ENCODE measurements at regions of chr1 and their contacts with region 1.

Region 1: GRCh38 chr1:204806943-204807687 is 63.5 kb upstream of the NFASC start:
- DNase-seq: peak; percentile 78
- ATAC-seq: peak; percentile 95
- H3K4me3 Mint-ChIP-seq: peak overlapping the region; percentile 93
- H3K27ac Mint-ChIP-seq: no peak overlapping the region
- H3K4me1 Mint-ChIP-seq: peaks cover 18% of the 10 kb centered on the region
- H3K27me3 Mint-ChIP-seq: peaks cover 3% of the 10 kb centered on the region
- CTCF ChIP-seq: peak; percentile 100

Region 2: GRCh38 chr1:204162231-204163074 is 644.7 kb before region 1 on chr1:
- CTCF ChIA-PET with region 1: interaction called, 27 read pairs
- POLR2A ChIA-PET with region 1: no interaction called
- intact Hi-C with region 1: loop called (anchors 1 kb)
- DNase-seq: peak; percentile 71
- ATAC-seq: peak; percentile 98
- H3K4me3 Mint-ChIP-seq: no peak overlapping the region
- H3K27ac Mint-ChIP-seq: no peak overlapping the region
- H3K4me1 Mint-ChIP-seq: no peaks in the 10 kb centered on the region
- H3K27me3 Mint-ChIP-seq: peaks cover 20% of the 10 kb centered on the region
- CTCF ChIP-seq: peak; percentile 60

Region 3: DNA sequence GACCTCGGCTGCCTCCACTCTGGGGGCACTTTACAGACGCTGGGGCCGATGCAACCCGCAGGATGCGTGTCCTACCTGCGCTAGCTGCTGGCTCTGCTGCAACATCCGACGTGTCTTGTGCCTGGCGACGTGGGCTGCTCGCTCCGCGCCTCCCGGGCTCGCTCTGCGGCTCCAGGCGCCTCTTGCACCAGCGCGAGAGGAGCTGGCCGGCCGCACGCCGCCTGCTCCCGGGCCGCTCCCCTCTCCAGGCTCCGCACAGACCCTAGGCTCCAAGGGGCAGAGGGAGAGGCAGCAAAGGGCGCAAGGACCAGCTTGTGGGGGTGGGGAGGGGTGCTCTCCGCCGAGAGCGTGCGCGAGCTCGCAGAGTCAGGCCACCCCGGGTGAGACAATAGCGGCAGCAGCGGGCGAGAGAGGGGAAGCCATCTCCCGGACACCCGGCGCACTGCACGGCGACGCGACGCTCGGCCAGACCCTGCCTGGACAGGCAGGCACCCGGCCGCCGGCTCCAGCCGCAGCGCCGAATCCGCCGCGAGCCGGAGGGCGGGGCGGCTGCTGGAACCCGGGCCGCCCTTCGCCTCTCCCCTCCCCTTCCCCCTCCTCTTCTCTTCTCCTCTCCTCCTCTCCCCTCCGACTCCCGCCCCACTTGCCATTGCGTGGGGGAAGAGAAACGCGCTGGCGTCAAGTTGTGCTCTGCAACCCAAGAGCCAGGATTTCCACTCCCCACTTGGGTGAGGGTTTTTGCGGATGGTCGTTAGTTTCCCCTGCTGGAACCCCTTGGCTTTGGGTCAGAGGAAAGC is 312.6 kb before region 1 on chr1 and contains the start of gene PIK3C2B:
- CTCF ChIA-PET with region 1: interaction called, 4 read pairs
- POLR2A ChIA-PET with region 1: no interaction called
- intact Hi-C with region 1: loop called (anchors 1 kb)
- DNase-seq: peak; percentile 71
- ATAC-seq: peak; percentile 75
- H3K4me3 Mint-ChIP-seq: peak within 1 kb of the TSS; percentile 97
- H3K27ac Mint-ChIP-seq: peak within 1 kb of the TSS; percentile 97
- H3K4me1 Mint-ChIP-seq: peaks cover 80% of the 10 kb centered on the region
- H3K27me3 Mint-ChIP-seq: no peaks in the 10 kb centered on the region
- CTCF ChIP-seq: no peak
- total RNA-seq, gene PIK3C2B: 127 and 151 TPM in 2 replicates

Region 4: GRCh38 chr1:204565617-204566582 is 241.2 kb before region 1 on chr1:
- CTCF ChIA-PET with region 1: interaction called, 155 read pairs
- POLR2A ChIA-PET with region 1: interaction called, 9 read pairs
- intact Hi-C with region 1: loop called (anchors 1 kb)
- DNase-seq: peak; percentile 31
- ATAC-seq: peak; percentile 80
- H3K4me3 Mint-ChIP-seq: peak overlapping the region; percentile 22
- H3K27ac Mint-ChIP-seq: peak overlapping the region; percentile 68
- H3K4me1 Mint-ChIP-seq: peaks cover 41% of the 10 kb centered on the region
- H3K27me3 Mint-ChIP-seq: no peaks in the 10 kb centered on the region
- CTCF ChIP-seq: peak; percentile 61

Region 5: GRCh38 chr1:204651843-204652421 is 155.2 kb before region 1 on chr1:
- CTCF ChIA-PET with region 1: no interaction called
- POLR2A ChIA-PET with region 1: no interaction called
- intact Hi-C with region 1: no loop called
- DNase-seq: no peak
- ATAC-seq: no peak
- H3K4me3 Mint-ChIP-seq: no peak overlapping the region
- H3K27ac Mint-ChIP-seq: no peak overlapping the region
- H3K4me1 Mint-ChIP-seq: no peaks in the 10 kb centered on the region
- H3K27me3 Mint-ChIP-seq: peaks cover 15% of the 10 kb centered on the region
- CTCF ChIP-seq: no peak

Region 6: DNA sequence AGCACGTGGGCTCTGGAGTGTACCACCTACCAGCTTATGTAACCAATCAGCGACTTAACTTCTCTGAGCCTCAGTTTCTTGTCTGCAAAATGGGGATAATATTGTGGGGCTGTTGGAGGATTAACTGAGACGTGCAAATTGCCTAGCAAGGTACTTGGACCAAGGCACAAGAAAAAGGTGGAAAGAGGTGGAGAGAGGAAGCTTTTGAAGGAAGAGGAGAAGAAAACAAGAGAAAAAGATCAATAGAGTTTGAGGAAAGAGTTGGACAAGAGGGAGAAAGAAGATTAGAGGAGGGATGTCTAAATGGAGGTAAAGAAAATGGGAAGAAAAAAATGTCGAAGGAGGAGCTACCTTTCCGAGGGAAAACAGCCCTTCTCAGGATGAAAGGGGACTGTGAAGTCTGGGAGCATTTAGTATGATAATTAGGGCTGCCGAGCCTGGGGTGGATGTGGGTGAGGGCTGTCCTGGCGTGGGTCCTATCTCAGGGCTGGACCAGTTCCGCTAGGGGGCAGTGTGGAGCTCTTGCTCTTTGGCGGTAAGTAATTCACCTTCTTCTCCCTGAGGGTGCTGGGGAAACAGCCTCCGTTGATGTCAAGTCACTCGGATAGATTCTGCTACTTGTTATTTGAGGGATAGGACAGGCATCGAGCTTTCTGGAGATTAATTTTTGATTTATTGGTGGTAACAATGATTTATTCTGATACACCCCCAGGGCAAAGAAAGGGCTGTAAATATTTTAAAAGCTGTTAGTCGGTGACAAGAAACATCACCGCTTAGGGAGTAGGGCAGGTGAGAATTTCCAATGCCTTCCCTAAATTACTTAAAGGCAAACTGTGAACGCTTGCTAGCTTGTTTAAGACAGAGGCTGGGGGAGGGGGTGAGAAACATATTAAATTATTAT is 15.4 kb before region 1 on chr1:
- CTCF ChIA-PET with region 1: interaction called, 65 read pairs
- POLR2A ChIA-PET with region 1: no interaction called
- intact Hi-C with region 1: loop called (anchors 1 kb)
- DNase-seq: peak; percentile 67
- ATAC-seq: peak; percentile 79
- H3K4me3 Mint-ChIP-seq: no peak overlapping the region
- H3K27ac Mint-ChIP-seq: no peak overlapping the region
- H3K4me1 Mint-ChIP-seq: no peaks in the 10 kb centered on the region
- H3K27me3 Mint-ChIP-seq: peaks cover 25% of the 10 kb centered on the region
- CTCF ChIP-seq: peak; percentile 81

Region 7: GRCh38 chr1:205061665-205062069 is 254.6 kb after region 1 on chr1:
- CTCF ChIA-PET with region 1: interaction called, 10 read pairs
- POLR2A ChIA-PET with region 1: no interaction called
- intact Hi-C with region 1: no loop called
- DNase-seq: peak; percentile 53
- ATAC-seq: peak; percentile 61
- H3K4me3 Mint-ChIP-seq: peak overlapping the region; percentile 15
- H3K27ac Mint-ChIP-seq: no peak overlapping the region
- H3K4me1 Mint-ChIP-seq: no peaks in the 10 kb centered on the region
- H3K27me3 Mint-ChIP-seq: no peaks in the 10 kb centered on the region
- CTCF ChIP-seq: peak; percentile 51